ENCODE measurements at regions of chr5 and their contacts with region 1.

Region 1: DNA sequence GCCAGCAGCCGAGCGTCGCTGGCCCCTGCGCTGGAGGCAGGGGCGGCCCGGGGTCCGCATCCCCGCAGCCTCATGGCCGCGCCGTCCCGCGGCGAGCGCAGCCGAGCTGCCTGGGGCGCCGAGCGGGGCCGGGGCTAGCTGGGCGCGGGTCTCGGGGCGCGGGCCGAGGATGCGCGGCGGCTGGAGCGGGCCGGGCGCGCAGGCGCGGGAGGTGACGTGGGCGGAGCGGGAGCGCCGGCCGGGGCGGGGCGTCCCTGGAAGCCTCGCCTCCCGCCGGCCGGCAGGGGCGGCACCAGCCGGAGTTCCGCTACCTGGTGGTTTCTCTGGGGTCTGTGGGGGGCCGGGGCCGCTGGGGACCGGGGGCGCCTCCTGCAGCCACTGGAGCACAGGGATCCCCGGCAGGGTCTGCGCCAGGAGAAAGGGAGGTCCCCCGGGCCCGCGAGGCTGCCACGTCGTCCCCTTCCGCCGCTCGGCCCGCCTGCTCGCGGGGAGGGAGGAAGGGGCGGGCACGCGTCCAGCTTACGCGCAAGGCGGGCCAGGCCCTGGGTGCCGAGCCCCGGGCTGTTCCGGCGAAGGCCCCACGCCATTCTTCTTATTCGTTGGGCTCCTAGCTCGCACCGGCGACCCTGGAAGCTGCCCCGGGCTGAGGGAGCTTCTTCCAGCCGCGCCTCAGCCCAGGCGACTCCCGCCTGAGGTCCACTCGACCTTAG is at the start of gene LPCAT1:
- DNase-seq: no peak
- ATAC-seq: peak; percentile 89
- H3K4me3 ChIP-seq: peak within 1 kb of the TSS; percentile 88
- H3K27ac ChIP-seq: peak within 1 kb of the TSS; percentile 78
- H3K4me1 ChIP-seq: peaks cover 16% of the 10 kb centered on the region
- H3K27me3 ChIP-seq: no peaks in the 10 kb centered on the region
- CTCF ChIP-seq: 0 out of 6 replicates have a peak, but pooled peaks of 1 of the 3 experiments have one; percentile 5
- EP300 ChIP-seq: no peak
- POLR2A ChIP-seq: peak; percentile 86
- RAD21 ChIP-seq: no peak
- polyA plus RNA-seq, gene LPCAT1: 2.3 to 7.0 TPM

Region 2: GRCh38 chr5:1503241-1504068 is 20.5 kb before region 1 on chr5:
- CTCF ChIA-PET with region 1: interaction called, 5 read pairs
- POLR2A ChIA-PET with region 1: interaction called, 29 read pairs
- RAD21 ChIA-PET with region 1: interaction called, 13 read pairs
- SMC1A ChIA-PET with region 1: interaction called, 23 read pairs
- in situ Hi-C with region 1: no loop called
- intact Hi-C with region 1: loop called (anchors 2 kb)
- DNase-seq: no peak
- ATAC-seq: peak; percentile 42
- H3K4me3 ChIP-seq: peak overlapping the region; percentile 55
- H3K27ac ChIP-seq: peak overlapping the region; percentile 93
- H3K4me1 ChIP-seq: peaks cover 81% of the 10 kb centered on the region
- H3K27me3 ChIP-seq: no peaks in the 10 kb centered on the region
- CTCF ChIP-seq: no peak
- EP300 ChIP-seq: no peak
- POLR2A ChIP-seq: no peak
- RAD21 ChIP-seq: no peak

Region 3: DNA sequence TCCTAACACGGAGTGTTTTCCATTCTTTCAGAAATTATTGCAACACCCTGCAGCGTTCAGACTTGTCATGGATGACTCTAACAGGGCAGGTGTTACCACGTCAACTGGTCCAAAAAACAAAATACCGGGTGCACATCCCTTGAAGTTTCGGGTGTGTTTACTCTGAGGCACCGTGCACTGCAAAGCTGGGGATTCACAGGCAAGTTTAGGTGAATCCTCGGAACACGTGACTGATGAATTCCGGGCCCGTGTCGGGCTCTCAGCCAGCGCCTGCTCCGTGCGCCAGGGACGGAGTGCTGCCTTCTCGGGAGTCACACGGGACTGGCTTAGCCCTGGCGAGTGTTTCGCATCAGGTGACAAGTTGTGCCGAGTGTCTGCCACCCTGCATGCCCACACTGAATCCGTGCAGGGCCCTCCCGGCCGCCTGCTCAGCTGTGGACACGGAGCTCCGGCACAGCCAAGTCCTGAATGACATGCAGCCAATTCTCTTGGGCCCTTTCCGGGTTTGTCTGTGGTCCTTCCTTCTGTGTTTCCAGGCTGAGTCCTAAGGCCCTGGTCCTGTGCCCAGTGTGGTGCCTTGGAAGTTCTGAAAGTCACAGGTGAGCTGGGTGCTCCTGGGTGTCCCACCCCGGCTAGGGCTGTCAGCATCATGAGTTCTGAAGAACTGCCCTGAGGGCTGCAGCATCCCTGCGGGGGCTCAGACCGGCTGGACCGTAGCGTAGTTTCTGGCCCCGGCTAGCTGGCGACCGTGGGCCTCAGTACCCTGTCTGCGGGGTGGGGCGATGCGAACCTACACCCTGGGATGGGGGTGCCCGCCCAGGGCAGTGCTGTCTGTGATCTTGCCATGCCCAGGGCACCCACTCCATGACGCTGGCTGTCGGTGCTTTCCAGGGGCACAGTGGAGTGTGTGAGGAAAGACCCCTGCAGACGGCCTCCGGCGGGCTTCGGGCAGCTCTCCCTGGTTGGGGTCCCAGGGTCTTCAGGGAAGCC is 425.0 kb after region 1 on chr5:
- CTCF ChIA-PET with region 1: no interaction called
- POLR2A ChIA-PET with region 1: no interaction called
- RAD21 ChIA-PET with region 1: no interaction called
- SMC1A ChIA-PET with region 1: no interaction called
- in situ Hi-C with region 1: no loop called
- intact Hi-C with region 1: no loop called
- DNase-seq: no peak
- ATAC-seq: no peak
- H3K4me3 ChIP-seq: no peak overlapping the region
- H3K27ac ChIP-seq: no peak overlapping the region
- H3K4me1 ChIP-seq: no peaks in the 10 kb centered on the region
- H3K27me3 ChIP-seq: no peaks in the 10 kb centered on the region; a peak in 2 of 4 replicates
- CTCF ChIP-seq: no peak
- EP300 ChIP-seq: no peak
- POLR2A ChIP-seq: no peak
- RAD21 ChIP-seq: no peak

Measured in GM12878 (cell line).